PC-9 (cell line): ENCODE measurements at regions of chr5 and their contacts with region 1.

Region 1: DNA sequence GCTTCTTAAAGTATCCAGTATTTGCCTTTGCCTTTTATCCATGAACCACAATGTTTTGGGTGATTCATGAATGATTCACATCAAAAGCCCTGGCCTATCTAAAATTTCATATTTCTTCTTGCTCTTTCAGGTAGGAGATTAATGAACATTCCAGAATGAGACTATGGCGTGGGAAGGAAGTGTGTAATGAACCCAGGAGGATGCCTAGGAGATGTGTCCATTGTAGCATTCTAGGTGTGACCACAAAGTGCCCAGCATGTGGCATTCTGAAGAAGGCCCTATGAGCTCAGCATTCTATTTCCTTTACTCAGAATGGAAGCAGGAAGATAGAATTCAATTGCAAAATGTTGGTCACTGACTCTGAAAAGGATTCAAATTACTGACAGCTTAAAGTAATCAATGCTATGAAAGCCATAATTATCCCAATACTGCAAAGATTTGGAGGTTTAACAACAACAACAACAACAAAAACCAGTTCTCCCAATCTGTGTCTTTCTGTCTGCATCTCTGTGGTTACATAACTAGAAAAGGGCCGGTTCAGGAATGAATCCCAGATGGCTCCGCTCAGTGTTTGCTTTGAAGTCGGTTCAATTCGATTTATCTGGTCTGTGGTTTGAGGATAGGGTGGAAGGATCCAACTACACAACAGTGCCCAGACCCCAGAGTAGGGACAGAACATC is 126.7 kb downstream of the FOXD1 start:
- DNase-seq: peak; percentile 50 to 99
- H3K4me3 ChIP-seq: no peak overlapping the region
- H3K27ac ChIP-seq: peak overlapping the region; percentile 90
- H3K4me1 ChIP-seq: peaks cover 52% of the 10 kb centered on the region
- H3K27me3 ChIP-seq: no peaks in the 10 kb centered on the region
- CTCF ChIP-seq: no peak

Region 2: DNA sequence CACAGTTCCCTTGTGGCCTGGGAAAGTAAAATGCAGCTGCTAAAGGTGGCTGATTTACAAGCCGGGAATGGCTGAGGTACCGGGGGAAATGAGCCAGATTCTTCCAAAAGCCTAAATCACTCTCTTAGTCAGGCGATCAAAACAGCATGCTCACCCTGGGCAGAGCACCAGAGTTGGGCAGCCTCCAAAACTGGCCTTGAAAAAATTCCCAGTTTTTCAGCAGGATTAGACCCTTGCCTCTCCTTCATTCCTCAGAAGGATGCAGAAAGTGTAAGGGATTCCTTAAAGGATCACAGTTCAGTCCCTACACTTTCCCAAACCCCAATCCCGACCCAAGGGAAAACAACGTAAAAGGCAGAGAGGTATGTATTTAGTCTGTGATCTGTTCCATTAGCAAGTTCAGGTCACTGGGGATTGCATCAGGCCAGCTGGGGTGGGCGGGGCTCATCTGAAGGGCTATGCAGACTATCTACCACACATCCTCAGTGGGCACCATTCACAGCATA is 132.0 kb before region 1 on chr5:
- CTCF ChIA-PET with region 1: no interaction called
- POLR2A ChIA-PET with region 1: no interaction called
- intact Hi-C with region 1: no loop called
- DNase-seq: no peak
- H3K4me3 ChIP-seq: no peak overlapping the region
- H3K27ac ChIP-seq: no peak overlapping the region
- H3K4me1 ChIP-seq: no peaks in the 10 kb centered on the region
- H3K27me3 ChIP-seq: no peaks in the 10 kb centered on the region
- CTCF ChIP-seq: no peak

Region 3: DNA sequence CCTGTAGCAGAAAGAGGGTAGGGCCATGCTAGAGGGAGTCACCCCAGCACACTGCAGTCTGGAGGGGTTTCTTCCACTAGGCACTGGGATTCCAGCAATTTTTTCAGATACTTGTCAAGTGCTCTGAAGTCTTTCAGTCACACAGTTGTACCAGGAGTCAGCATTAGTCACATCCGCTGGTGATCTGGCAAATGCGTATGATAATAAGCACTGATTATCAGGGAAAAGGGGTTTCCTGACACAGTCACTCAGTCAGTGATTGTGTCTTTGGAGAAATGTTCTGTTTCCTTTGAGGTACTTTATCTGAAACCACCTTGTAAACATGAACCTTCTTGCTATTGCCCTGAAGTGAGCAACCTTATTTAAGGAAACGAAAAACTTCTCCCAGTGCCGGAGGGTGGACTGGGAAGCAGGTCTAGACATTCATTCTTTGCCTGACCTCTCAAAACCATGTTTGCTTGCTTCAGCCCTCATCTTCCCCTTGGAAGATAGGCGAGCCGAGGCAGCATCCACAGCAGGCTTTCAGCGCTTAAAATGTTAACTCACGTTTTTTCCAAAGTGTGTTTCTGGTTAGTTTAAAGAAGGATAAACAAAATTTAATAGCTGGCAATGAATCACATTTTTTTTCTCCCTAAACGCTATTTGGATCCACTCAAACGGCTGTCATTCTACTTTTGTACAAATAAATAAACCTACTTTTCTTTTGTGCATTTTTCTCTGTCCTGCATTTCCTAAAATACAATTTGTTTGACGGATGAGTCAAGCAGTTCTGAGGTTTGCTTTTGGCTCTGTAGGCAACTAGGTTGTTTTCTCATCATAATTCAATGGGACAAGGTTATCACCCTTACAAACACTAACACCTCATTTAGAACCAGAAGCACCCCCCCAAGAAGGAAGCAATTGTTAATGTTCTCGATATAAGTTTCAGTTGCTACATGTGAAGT is 49.0 kb after region 1 on chr5:
- CTCF ChIA-PET with region 1: no interaction called
- POLR2A ChIA-PET with region 1: no interaction called
- intact Hi-C with region 1: loop called (anchors 2 kb)
- DNase-seq: peak; percentile 58 to 98
- H3K4me3 ChIP-seq: peak overlapping the region; percentile 30; the same call in 1 of the 2 replicates
- H3K27ac ChIP-seq: peak overlapping the region; percentile 94
- H3K4me1 ChIP-seq: peaks cover 71% of the 10 kb centered on the region
- H3K27me3 ChIP-seq: no peaks in the 10 kb centered on the region
- CTCF ChIP-seq: no peak

Region 4: DNA sequence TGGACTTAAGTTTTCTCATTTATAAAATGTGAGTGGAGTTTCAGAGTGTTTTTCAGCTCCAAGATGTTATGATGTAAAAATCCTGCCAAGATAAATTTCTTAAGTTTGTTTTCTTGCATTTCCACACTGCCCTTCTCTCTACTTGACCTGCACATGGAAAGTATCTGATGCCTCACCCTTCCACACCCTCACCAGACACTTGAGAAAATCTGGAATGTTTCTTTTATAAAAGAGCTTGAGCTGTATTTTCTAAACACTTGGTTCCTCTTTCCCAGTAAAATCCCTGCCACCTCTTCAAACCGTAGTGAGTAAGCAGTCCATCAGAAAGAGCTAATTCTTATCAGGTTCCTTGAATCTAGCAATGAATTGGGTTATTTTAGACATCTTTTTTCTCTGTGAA is 83.8 kb after region 1 on chr5:
- CTCF ChIA-PET with region 1: interaction called, 10 read pairs
- POLR2A ChIA-PET with region 1: interaction called, 5 read pairs
- intact Hi-C with region 1: no loop called
- DNase-seq: no peak
- H3K4me3 ChIP-seq: no peak overlapping the region
- H3K27ac ChIP-seq: no peak overlapping the region
- H3K4me1 ChIP-seq: no peaks in the 10 kb centered on the region
- H3K27me3 ChIP-seq: no peaks in the 10 kb centered on the region
- CTCF ChIP-seq: no peak

Region 5: DNA sequence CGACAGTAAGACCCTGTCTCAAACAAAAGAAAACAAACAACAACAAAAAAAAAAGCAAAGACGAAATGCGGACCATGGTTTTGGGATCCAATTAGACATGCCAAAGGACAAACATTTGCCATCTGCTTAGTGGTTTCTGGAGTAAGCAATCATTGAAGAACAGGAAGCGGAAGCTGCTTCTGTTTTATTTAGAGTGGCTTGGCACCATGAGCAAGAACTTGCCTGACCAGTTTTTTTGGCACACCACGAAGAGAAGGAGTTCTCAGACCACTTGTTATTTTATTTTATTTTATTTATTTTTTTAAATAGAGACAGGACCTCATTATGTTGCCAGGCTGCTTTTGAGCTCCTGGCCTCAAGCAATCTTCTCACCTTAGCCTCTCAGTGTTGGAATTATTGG is 193.3 kb after region 1 on chr5:
- CTCF ChIA-PET with region 1: no interaction called
- POLR2A ChIA-PET with region 1: no interaction called
- intact Hi-C with region 1: no loop called
- DNase-seq: peak; percentile 19 to 72
- H3K4me3 ChIP-seq: no peak overlapping the region
- H3K27ac ChIP-seq: no peak overlapping the region
- H3K4me1 ChIP-seq: peaks cover 21% of the 10 kb centered on the region
- H3K27me3 ChIP-seq: no peaks in the 10 kb centered on the region
- CTCF ChIP-seq: no peak

Region 6: DNA sequence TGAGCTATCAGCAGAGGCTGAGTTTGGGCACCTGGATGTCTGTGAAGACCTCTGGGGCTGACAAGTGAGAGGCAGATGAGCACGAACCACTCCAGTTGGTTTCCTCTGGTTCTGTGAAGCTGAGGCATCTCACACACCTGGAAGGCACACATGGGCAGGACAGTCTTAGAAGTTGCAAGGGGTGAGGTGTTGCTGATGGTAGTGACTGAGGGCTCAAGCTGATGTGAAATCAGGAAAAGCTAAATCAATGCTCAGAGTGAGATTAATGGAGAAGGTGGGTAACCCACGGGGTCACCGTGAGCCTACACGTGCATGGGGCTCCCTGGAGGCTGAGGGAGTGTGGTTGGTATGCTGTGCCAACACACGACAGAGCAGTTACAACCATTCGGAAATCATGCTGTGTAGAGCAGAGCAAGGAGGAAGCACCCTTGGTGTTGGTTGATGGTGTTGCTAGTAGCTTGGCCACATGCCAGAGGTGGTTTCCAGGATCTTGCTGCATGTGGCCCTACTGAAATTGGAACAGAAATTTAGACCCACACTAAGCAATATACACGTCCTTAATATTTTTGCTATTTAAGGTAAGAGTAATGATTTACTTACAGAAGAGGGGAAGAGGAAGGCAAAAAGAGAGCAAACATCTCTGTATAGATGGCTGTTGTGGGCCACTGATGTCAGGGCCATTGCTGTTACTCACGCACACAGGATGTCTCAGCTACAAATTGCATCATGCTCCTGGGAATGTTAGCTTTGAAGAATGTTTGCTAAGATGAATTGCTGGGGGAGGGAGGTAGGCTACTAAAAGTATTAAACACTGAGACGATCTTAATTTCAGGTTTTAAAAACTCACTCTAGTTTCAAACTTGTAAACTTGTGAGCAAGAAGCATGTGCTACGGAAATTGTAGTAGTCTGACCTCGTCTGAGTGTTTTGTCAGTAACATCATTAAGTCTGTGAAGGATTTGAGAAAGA is 474.6 kb after region 1 on chr5:
- CTCF ChIA-PET with region 1: no interaction called
- POLR2A ChIA-PET with region 1: no interaction called
- intact Hi-C with region 1: no loop called
- DNase-seq: peak in 1 of 2 experiments; percentile 38
- H3K4me3 ChIP-seq: no peak overlapping the region
- H3K27ac ChIP-seq: no peak overlapping the region
- H3K4me1 ChIP-seq: peaks cover 12% of the 10 kb centered on the region
- H3K27me3 ChIP-seq: no peaks in the 10 kb centered on the region
- CTCF ChIP-seq: no peak